ENCODE measurements at regions of chr6 and their contacts with region 1.

Region 1: GRCh38 chr6:30344868-30345671 is at the start of gene RPP21:
- DNase-seq: peak; percentile 74 to 91 (median 86)
- ATAC-seq: peak; percentile 99
- H3K4me3 ChIP-seq: peak within 1 kb of the TSS; percentile 77
- H3K4me3 Mint-ChIP-seq: peak within 1 kb of the TSS; percentile 81 to 94 (median 89)
- H3K27ac ChIP-seq: peak within 1 kb of the TSS; percentile 97
- H3K27ac Mint-ChIP-seq: peak within 1 kb of the TSS; percentile 84 to 97 (median 92)
- H3K4me1 ChIP-seq: peaks cover 0 to 12% of the 10 kb centered on the region in 2 donors
- H3K4me1 Mint-ChIP-seq: peaks cover 12 to 32% (median 24%) of the 10 kb centered on the region in 7 donors
- H3K27me3 ChIP-seq: no peaks in the 10 kb centered on the region
- H3K27me3 Mint-ChIP-seq: peaks cover 0 to 7% (median 0%) of the 10 kb centered on the region in 5 donors
- total RNA-seq, gene RPP21: 39.7 to 61.2 (median 44.9) TPM

Region 2: DNA sequence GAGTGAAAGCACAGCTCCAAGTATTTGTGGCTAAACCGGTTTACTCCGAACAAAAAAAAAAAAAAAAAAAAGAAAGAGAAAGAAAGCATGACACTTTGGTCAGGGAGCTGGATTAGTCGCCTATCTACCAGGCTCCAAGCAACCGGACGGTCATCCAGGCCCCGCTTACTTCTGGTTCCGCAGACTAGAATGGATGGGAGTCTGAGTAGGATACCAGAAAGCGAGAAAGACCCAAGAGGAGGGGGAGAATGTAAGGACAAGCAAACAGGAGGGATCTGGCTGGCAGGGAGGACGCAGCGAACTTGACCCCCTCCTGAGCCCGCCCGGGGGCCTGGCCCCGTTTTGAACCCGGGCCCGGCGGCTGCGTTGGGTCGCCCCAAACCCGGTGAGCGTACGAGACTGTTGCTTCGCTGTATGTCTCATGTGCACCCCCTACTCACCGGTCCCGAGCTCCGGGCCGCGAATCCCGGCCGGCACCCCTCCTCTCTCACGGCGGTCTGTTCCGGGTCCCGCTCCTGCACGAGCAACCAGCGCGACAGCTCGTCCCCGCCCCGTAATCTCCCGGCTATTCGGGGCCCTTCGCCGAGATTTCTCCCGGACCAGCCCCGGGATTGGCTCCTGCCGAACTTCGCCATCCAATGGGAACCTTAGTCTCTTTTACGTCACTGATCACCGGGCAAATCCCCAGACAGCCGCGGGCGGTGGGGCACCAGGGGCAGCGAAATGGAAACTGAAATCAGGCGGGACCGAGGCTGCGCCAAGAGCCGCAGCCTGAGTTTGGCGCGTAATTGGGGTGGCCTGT is 132.0 kb before region 1 on chr6 and contains the start of gene TRIM26:
- CTCF ChIA-PET with region 1: no interaction called
- POLR2A ChIA-PET with region 1: interaction called, 4 read pairs
- intact Hi-C with region 1: loop called (anchors 1 to 5 kb)
- DNase-seq: peak; percentile 88 to 99 (median 97)
- ATAC-seq: peak; percentile 94
- H3K4me3 ChIP-seq: peak within 1 kb of the TSS; percentile 83
- H3K4me3 Mint-ChIP-seq: peak within 1 kb of the TSS; percentile 89 to 100 (median 96)
- H3K27ac ChIP-seq: peak within 1 kb of the TSS; percentile 99
- H3K27ac Mint-ChIP-seq: peak within 1 kb of the TSS; percentile 96 to 100 (median 99)
- H3K4me1 ChIP-seq: peaks cover 32 to 39% of the 10 kb centered on the region in 2 donors
- H3K4me1 Mint-ChIP-seq: peaks cover 47 to 62% (median 52%) of the 10 kb centered on the region in 7 donors
- H3K27me3 ChIP-seq: no peaks in the 10 kb centered on the region
- H3K27me3 Mint-ChIP-seq: peaks cover 0 to 5% (median 0%) of the 10 kb centered on the region in 5 donors
- total RNA-seq, gene TRIM26: 40.1 to 73.1 (median 49.1) TPM

Region 3: GRCh38 chr6:30378290-30378937 is 33.3 kb after region 1 on chr6:
- CTCF ChIA-PET with region 1: no interaction called
- POLR2A ChIA-PET with region 1: no interaction called
- intact Hi-C with region 1: no loop called
- DNase-seq: no peak
- ATAC-seq: no peak
- H3K4me3 ChIP-seq: no peak overlapping the region
- H3K4me3 Mint-ChIP-seq: no peak overlapping the region
- H3K27ac ChIP-seq: no peak overlapping the region
- H3K27ac Mint-ChIP-seq: no peak overlapping the region
- H3K4me1 ChIP-seq: no peaks in the 10 kb centered on the region
- H3K4me1 Mint-ChIP-seq: peaks cover 0 to 3% (median 0%) of the 10 kb centered on the region in 7 donors
- H3K27me3 ChIP-seq: no peaks in the 10 kb centered on the region
- H3K27me3 Mint-ChIP-seq: peaks cover 38 to 70% (median 43%) of the 10 kb centered on the region in 5 donors

Region 4: GRCh38 chr6:30990422-30991086 is 645.5 kb after region 1 on chr6:
- CTCF ChIA-PET with region 1: no interaction called
- POLR2A ChIA-PET with region 1: no interaction called
- intact Hi-C with region 1: no loop called
- DNase-seq: peak in 8 of 9 donors; percentile 4 to 51 (median 25)
- ATAC-seq: peak; percentile 67
- H3K4me3 ChIP-seq: peak overlapping the region; percentile 26
- H3K4me3 Mint-ChIP-seq: peak overlapping the region; percentile 62 to 90 (median 80)
- H3K27ac ChIP-seq: no peak overlapping the region
- H3K27ac Mint-ChIP-seq: peak overlapping the region; percentile 33 to 90 (median 75)
- H3K4me1 ChIP-seq: peaks cover 0 to 12% of the 10 kb centered on the region in 2 donors
- H3K4me1 Mint-ChIP-seq: peaks cover 10 to 15% (median 14%) of the 10 kb centered on the region in 7 donors
- H3K27me3 ChIP-seq: no peaks in the 10 kb centered on the region
- H3K27me3 Mint-ChIP-seq: peaks cover 0 to 3% (median 0%) of the 10 kb centered on the region in 5 donors

Measured in naive thymus-derived CD4-positive, alpha-beta T cell (primary cell).